Posterior vena cava (tissue), 2 donors: ENCODE measurements at regions of chr2 and their contacts with region 1.

Region 1: GRCh38 chr2:142286606-142287005 is 155.8 kb upstream of the LRP1B start:
- DNase-seq: no peak

Region 2: GRCh38 chr2:142075826-142076225 is 210.8 kb before region 1 on chr2:
- intact Hi-C with region 1: no loop called
- DNase-seq: no peak

Region 3: DNA sequence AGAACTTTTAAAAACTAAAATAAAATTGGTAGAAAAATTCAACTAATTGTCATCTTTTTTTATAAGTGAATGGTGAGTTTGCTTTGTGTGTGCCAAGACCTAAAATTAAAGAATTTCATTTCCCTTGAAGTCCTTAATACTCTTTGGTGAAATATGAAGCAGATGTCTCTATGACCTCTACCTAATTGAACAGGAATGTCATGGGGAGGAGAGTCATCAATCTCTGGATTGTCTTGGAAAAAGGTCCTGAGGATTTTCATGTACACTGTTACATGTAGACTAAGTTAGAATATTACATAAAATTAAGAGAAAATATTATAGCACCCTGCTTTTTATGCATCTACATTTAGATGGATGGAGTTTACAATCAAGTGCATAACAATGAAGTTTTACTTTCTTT is 22.1 kb after region 1 on chr2:
- intact Hi-C with region 1: loop called in 1 of 2 experiments (anchors 1 kb)
- DNase-seq: no peak

Region 4: DNA sequence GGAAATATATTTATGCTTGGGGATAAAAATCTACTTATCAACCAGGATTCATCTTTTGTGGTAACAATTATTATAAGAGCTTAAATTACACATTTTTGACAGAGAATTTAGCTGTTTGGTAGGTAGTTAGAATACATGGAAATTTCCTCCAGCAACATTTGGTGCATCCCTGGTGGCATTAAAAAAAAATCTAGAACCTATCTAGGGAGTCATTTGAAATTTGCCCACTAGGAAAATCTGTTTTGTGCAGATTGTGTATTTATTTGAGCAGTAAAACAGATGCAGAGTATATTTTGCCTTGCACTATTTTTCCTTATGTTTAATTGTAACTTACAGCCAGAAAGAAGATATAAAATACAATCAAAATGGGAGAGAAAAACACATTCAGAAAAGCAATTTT is 52.7 kb after region 1 on chr2:
- intact Hi-C with region 1: no loop called
- DNase-seq: no peak